Mammary epithelial cell (primary cell): ENCODE measurements at regions of chr4 and their contacts with region 1.

Region 1: DNA sequence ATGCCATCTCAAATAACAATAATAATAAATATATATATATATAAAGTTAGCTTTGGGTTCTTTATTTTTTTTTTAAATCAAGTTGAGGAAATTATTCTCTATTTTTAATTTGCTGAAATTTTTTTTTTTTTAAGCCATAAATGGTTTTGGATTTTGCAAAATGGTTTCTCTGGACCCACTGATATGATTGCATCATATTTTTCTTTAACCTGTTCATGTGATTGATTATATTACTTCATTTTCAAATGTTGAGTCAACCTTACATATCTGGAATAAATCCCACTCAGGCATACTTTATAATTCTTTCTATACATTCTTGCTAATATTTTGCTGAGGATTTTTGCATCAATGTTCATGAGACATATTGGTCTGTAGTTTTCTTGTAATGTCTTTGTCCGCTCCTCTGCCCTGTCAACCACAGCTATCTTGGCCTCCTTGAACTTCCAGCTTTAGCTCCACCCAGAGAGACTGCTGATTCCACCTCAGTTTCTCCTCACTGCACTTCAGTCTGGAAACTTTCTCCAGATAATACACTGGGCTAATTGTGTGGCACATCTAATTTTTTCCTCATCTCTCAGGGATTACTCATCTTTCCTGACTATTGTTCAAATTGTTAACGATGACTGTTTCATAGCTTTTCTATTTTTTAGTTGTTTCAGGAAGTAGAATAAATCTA is 160.9 kb upstream of the GIMD1 start:
- DNase-seq: peak; percentile 82
- H3K4me3 ChIP-seq: no peak overlapping the region
- H3K27ac ChIP-seq: peak overlapping the region; percentile 80
- H3K4me1 ChIP-seq: peaks cover 15% of the 10 kb centered on the region
- H3K27me3 ChIP-seq: no peaks in the 10 kb centered on the region
- CTCF ChIP-seq: no peak

Region 2: GRCh38 chr4:106478152-106478551 is 51.3 kb before region 1 on chr4:
- CTCF ChIA-PET with region 1: no interaction called
- dilution Hi-C with region 1: no loop called
- in situ Hi-C with region 1: no loop called
- intact Hi-C with region 1: no loop called
- DNase-seq: no peak
- H3K4me3 ChIP-seq: no peak overlapping the region
- H3K27ac ChIP-seq: no peak overlapping the region
- H3K4me1 ChIP-seq: no peaks in the 10 kb centered on the region
- H3K27me3 ChIP-seq: no peaks in the 10 kb centered on the region
- CTCF ChIP-seq: no peak

Region 3: DNA sequence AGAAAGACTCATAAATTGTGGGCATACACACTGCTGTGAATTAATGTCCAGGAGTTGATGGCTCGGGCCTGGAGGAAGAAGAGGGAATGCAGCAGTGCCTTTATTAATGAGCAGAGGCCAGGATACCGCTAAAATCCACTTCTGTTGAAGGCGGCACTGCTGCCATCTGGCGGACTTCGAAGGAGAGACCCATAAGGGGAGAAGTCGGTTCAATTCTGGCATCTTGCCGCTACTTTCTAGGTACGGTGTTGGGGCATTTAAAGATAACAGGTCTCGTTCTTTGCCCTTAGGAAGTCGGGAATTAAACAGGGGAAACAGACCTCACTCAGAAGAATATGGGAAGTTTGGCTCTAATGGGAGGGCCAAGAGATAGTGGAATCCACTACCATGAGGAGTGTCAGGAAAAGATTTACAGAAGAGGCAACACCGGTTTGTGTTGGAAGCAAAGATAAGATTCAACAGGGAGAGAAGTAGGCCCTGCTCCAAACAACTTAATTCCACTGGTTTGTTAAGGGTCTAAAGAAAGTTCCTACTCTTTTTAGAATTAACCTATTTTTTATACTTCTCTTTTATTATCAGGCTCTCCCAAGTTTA is 27.3 kb before region 1 on chr4:
- CTCF ChIA-PET with region 1: no interaction called
- dilution Hi-C with region 1: no loop called
- in situ Hi-C with region 1: no loop called
- intact Hi-C with region 1: no loop called
- DNase-seq: peak; percentile 52
- H3K4me3 ChIP-seq: no peak overlapping the region
- H3K27ac ChIP-seq: no peak overlapping the region
- H3K4me1 ChIP-seq: no peaks in the 10 kb centered on the region
- H3K27me3 ChIP-seq: no peaks in the 10 kb centered on the region
- CTCF ChIP-seq: peak; percentile 65 to 87

Region 4: GRCh38 chr4:106569146-106570031 is 39.9 kb after region 1 on chr4:
- CTCF ChIA-PET with region 1: no interaction called
- dilution Hi-C with region 1: no loop called
- in situ Hi-C with region 1: no loop called
- intact Hi-C with region 1: no loop called
- DNase-seq: no peak
- H3K4me3 ChIP-seq: no peak overlapping the region
- H3K27ac ChIP-seq: no peak overlapping the region
- H3K4me1 ChIP-seq: peaks cover 15% of the 10 kb centered on the region
- H3K27me3 ChIP-seq: no peaks in the 10 kb centered on the region
- CTCF ChIP-seq: no peak

Region 5: GRCh38 chr4:106583567-106583966 is 54.1 kb after region 1 on chr4:
- CTCF ChIA-PET with region 1: no interaction called
- dilution Hi-C with region 1: no loop called
- in situ Hi-C with region 1: no loop called
- intact Hi-C with region 1: loop called (anchors 5 kb)
- DNase-seq: peak; percentile 97
- H3K4me3 ChIP-seq: no peak overlapping the region
- H3K27ac ChIP-seq: peak overlapping the region; percentile 90
- H3K4me1 ChIP-seq: peaks cover 54% of the 10 kb centered on the region
- H3K27me3 ChIP-seq: no peaks in the 10 kb centered on the region
- CTCF ChIP-seq: no peak